OCI-LY7 (cell line): ENCODE measurements at regions of chr4 and their contacts with region 1.

Region 1: DNA sequence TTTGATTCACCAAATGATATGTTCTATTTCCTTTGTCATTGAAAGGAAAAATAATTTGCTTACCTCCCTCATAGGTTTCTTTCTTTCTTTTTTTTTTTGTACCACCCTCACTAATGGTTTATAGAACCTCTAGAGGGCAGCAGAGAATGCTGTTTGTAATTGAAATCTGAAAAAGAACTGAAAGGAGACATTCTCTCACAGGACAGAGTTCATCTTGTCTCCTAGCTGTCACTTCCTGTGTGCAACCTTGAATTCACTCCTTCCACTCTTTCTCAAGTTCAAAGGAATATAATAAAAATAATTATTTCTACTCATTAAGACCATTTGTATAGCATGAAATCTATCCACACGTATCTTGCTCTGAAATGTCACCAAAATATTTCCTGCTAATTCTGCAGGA is 51.0 kb downstream of the GUCY1B1 start:
- DNase-seq: peak; percentile 65
- H3K4me3 ChIP-seq: no peak overlapping the region
- H3K27ac ChIP-seq: no peak overlapping the region
- H3K4me1 ChIP-seq: no peaks in the 10 kb centered on the region
- CTCF ChIP-seq: peak; percentile 79

Region 2: DNA sequence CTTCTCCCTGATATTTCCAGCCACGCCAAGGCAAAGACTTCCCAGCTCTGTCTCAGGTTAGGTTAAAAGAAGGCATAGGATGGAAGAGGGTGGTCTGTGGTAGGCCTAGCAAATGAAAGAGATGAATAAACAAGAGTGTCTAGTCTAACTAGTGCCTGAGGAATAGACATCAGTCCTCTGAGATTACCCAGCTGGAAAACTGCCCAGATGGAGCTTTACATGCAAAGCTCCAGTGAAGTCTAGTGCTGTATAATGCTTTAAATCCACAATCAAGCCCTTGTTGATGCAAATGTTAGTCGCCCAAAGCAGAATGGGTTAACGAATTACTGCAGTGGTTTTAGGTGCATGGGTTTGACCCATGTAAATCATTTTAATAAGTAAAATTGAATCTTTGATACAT is 75.8 kb before region 1 on chr4:
- CTCF ChIA-PET with region 1: no interaction called
- POLR2A ChIA-PET with region 1: no interaction called
- intact Hi-C with region 1: no loop called
- DNase-seq: no peak
- H3K4me3 ChIP-seq: no peak overlapping the region
- H3K27ac ChIP-seq: no peak overlapping the region
- H3K4me1 ChIP-seq: no peaks in the 10 kb centered on the region
- CTCF ChIP-seq: no peak

Region 3: DNA sequence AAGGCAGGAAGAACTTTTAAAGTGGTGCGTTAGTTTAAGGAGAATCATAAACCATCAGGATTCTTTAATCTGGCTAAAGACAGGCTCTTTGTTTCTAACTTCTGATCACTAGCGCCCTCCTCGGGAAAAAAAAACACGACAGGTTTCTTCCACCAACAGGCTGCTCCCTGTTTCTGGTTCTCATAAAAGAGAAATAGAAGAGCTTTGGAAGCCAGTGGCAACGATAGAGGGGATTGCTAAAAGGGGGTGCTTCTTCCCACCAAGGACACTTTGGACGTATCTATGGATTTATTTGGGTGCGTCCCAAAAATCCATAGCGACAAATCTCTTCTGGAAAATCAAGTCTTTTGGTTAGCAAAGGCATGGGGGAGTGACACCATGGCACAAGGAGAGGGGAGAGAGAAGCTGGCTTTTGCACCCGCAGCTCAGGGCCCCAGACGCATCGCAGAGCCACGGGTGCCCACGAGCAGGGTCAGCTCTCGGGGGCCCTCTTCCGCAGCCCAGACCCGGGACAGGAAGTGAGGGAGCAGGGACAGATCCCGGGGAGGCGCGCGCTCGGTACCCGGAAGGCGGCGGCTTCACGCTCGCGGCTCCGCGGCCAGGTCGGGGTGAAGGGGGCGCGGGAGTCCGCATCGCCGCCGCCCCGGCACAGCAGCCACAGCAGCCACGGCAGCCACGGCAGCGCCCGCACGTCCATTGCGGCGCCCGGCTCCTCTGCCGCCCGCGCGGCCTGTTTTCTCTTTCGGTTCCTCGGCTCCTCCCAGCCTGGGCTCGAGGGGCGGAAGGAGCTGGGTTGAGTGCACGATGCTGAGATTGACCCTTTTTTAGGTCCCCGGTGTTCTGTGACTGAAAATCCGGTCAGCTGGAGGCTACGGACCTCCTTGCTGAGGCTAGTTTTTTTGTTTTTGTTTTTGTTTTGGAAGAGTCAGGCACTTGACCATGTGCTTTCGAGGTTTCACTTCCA is 143.6 kb after region 1 on chr4 and contains the start of gene CTSO:
- CTCF ChIA-PET with region 1: interaction called, 4 read pairs
- POLR2A ChIA-PET with region 1: no interaction called
- intact Hi-C with region 1: loop called (anchors 2 kb)
- DNase-seq: peak; percentile 66
- H3K4me3 ChIP-seq: peak within 1 kb of the TSS; percentile 64
- H3K27ac ChIP-seq: peak within 1 kb of the TSS; percentile 45
- H3K4me1 ChIP-seq: no peaks in the 10 kb centered on the region
- CTCF ChIP-seq: peak; percentile 73
- total RNA-seq, gene CTSO: 0.05 and 0.92 TPM in 2 replicates